AG04450 (cell line): ENCODE measurements at regions of chr1 and their contacts with region 1.

Region 1: GRCh38 chr1:201506556-201507359 is at the start of gene CSRP1:
- DNase-seq: no peak
- H3K4me3 ChIP-seq: peak within 1 kb of the TSS; percentile 85
- H3K27ac ChIP-seq: peak within 1 kb of the TSS; percentile 99
- H3K27me3 ChIP-seq: no peaks in the 10 kb centered on the region
- CTCF ChIP-seq: no peak
- polyA plus RNA-seq, gene CSRP1: 641 and 730 TPM in 2 replicates

Region 2: GRCh38 chr1:201379691-201380619 is 126.8 kb before region 1 on chr1:
- CTCF ChIA-PET with region 1: no interaction called
- POLR2A ChIA-PET with region 1: no interaction called
- DNase-seq: no peak
- H3K4me3 ChIP-seq: no peak overlapping the region
- H3K27ac ChIP-seq: no peak overlapping the region
- H3K27me3 ChIP-seq: peaks cover 7% of the 10 kb centered on the region
- CTCF ChIP-seq: no peak

Region 3: DNA sequence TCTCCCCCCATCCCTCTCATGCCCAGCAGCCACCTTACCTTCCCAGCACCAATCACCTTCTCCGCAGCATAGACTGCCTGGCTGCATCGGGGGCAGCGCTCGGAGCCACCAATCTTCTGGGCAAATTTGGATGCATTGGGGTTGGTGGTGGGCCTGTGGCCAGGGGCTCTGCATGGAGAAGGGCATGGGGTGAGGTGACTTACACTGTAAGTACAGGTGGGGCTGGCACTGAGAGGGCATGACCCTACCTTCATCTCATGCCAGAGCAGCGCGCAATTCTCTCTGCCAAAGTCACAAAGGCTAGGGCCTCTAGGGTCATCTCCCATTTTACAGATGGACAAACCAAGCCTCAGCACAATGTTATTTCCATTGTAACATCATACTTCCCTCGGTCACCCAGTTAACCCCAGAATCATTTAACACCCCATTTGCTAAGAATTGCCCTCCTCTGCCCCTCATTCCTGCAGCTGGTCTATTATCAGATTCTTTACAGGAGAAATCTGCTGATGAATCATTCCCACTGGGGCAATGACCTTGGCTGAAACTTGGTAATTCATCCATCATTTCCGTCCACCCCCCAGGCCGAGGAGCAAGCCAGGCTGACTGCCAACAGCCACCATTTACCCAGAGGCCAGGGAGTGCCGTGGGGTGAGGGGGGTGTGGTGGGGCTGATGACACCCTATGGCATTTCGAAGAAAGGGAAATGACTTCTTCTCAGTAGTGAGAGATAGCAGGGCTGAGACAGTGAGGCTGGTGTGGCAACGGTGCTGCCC is 17.8 kb before region 1 on chr1:
- CTCF ChIA-PET with region 1: interaction called, 307 read pairs
- POLR2A ChIA-PET with region 1: interaction called, 66 read pairs
- DNase-seq: peak; percentile 78
- H3K4me3 ChIP-seq: no peak overlapping the region
- H3K27ac ChIP-seq: peak overlapping the region; percentile 80
- H3K27me3 ChIP-seq: no peaks in the 10 kb centered on the region
- CTCF ChIP-seq: no peak